Activated T-helper 1 cell treated with anti-CD3 and anti-CD28 coated beads, Interleukin-12 subunit alpha, Interleukin-12 subunit beta, Interleukin-2, Interleukin-4 antibody, amounts not matched to agents 30 ng/mL and 10 ng/mL and 1 ng/mL, durations not matched to agents 14 hours and 24 hours and 36 hours (primary cell): ENCODE measurements at regions of chr5 and their contacts with region 1.

Region 1: DNA sequence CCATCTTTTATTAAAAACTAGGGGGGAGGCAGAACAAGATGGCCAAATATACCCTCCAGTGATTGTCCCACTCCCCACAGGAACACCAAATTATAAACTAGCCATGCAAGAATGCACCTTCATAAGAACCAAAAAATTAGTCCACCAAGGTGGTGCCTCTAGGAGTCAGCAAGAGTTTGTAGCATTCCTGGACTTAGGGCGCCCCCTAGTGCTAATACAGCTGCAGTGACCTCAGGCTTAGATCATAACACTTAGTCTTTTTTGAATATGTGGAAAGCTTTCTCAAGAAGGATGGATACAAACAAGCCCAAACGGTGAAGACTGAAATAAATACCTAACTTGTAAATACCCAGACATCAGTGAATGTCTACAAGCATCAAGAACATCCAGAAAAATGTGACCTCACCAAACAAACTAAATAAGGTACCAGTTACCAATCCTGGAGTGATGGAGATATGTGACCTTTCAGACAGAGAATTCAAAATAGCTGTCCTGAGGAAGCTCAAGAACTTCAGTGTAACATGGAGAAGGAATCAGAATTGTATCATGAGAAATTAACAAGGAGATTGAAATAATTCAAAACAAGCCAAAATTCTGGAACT is 19.3 kb downstream of the PPIP5K2 start:
- DNase-seq: peak; percentile 61
- H3K4me3 Mint-ChIP-seq: no peak overlapping the region
- H3K27ac Mint-ChIP-seq: no peak overlapping the region
- H3K4me1 Mint-ChIP-seq: peaks cover 5% of the 10 kb centered on the region
- H3K27me3 Mint-ChIP-seq: no peaks in the 10 kb centered on the region

Region 2: GRCh38 chr5:102583276-102584124 is 555.9 kb before region 1 on chr5:
- intact Hi-C with region 1: loop called (anchors 1 kb)
- DNase-seq: no peak
- H3K4me3 Mint-ChIP-seq: no peak overlapping the region
- H3K27ac Mint-ChIP-seq: no peak overlapping the region
- H3K4me1 Mint-ChIP-seq: no peaks in the 10 kb centered on the region
- H3K27me3 Mint-ChIP-seq: peaks cover 4% of the 10 kb centered on the region

Region 3: DNA sequence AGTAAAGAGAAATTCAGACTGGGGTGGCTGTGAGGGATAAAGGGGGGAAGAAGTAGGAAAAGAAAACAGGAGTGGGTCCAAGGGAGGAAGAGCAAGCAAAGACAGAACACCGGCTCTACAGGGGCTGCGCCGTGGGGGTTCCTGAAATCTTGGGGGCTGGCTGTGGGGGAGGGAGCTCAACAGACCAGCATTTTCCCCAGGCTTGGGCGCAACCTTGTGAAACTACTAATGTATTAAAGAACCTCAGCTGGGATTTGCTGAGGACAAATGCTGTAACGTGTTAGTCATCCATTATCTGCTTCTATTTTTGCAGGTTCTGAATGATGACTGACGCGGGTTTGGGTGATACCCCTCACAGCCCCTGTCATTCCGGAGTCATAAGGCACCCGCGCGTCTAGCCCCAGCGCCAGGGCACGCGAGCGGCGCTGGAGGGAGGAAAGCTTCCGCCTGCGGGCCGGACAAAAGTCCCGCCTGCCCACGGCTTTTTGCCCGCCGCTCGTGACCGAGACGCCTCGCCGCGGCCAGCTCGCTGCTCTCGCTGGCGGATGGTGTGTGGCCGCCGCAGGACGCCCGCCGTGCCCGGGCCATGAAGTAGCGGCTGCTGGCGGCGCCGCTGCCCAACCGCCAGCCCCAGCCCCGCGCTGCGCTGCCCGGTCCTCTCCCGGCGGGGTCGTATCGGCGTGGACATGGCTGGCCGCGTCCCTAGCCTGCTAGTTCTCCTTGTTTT is 273.7 kb before region 1 on chr5:
- intact Hi-C with region 1: loop called (anchors 5 kb)
- DNase-seq: no peak
- H3K4me3 Mint-ChIP-seq: peak overlapping the region; percentile 69
- H3K27ac Mint-ChIP-seq: no peak overlapping the region
- H3K4me1 Mint-ChIP-seq: peaks cover 11% of the 10 kb centered on the region
- H3K27me3 Mint-ChIP-seq: peaks cover 16% of the 10 kb centered on the region

Region 4: GRCh38 chr5:102971697-102972293 is 167.6 kb before region 1 on chr5:
- intact Hi-C with region 1: loop called (anchors 2 kb)
- DNase-seq: no peak
- H3K4me3 Mint-ChIP-seq: no peak overlapping the region
- H3K27ac Mint-ChIP-seq: no peak overlapping the region
- H3K4me1 Mint-ChIP-seq: no peaks in the 10 kb centered on the region
- H3K27me3 Mint-ChIP-seq: peaks cover 1% of the 10 kb centered on the region

Region 5: GRCh38 chr5:102991802-102992201 is 147.6 kb before region 1 on chr5:
- intact Hi-C with region 1: no loop called
- DNase-seq: no peak
- H3K4me3 Mint-ChIP-seq: no peak overlapping the region
- H3K27ac Mint-ChIP-seq: no peak overlapping the region
- H3K4me1 Mint-ChIP-seq: no peaks in the 10 kb centered on the region
- H3K27me3 Mint-ChIP-seq: no peaks in the 10 kb centered on the region

Region 6: GRCh38 chr5:103119765-103120606 is 19.4 kb before region 1 on chr5 and contains the starts of genes GIN1 and PPIP5K2:
- intact Hi-C with region 1: loop called (anchors 1 kb)
- DNase-seq: peak; percentile 96
- H3K4me3 Mint-ChIP-seq: peak within 1 kb of the TSS; percentile 93
- H3K27ac Mint-ChIP-seq: peak within 1 kb of the TSS; percentile 96
- H3K4me1 Mint-ChIP-seq: peaks cover 41% of the 10 kb centered on the region
- H3K27me3 Mint-ChIP-seq: no peaks in the 10 kb centered on the region
- total RNA-seq, gene GIN1: 8.6 and 9.3 TPM in 2 replicates
- total RNA-seq, gene PPIP5K2: 47.6 and 52.7 TPM in 2 replicates